GM12878 (cell line): ENCODE measurements at regions of chr12 and their contacts with region 1.

Region 1: DNA sequence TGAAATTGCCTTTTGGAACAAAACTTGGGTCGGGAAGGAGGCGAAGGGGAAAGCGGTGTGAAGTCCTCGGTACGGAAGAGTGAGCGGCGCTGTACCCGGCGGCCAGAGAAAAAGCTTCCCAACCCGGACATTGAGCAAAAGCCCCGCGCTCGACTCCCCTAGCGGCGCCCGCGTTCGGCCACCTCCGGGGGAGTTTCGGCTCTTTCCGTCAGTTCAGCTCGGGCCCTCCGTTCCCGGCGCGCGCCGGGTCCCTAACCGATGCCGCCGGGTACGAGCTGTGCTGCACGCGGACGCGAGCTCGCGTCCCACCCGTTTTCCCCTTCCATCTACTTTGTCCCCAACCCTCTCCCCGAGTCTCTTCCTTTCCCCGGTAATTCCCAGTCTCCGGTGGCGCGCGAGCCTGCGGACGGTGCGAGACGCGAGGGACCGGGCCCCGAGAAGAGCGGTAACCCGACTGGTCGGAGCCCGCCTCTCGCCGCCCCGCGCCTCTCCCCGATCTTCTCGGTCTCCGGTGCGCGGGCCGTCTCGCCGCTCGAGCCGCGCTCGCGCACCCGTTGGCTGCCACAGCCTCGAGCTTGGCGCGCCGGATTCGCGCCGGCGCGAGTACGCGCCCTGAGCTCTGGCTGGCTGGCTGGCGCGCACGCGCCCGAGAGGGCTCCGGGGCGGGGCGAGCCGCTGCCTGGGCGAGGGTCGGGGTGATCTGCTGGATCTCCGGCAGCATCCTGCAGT is 446 bp upstream of the SPATS2 start:
- DNase-seq: peak; percentile 73
- ATAC-seq: peak; percentile 84
- H3K4me3 ChIP-seq: peak overlapping the region; percentile 89
- H3K27ac ChIP-seq: peak overlapping the region; percentile 97
- H3K4me1 ChIP-seq: peaks cover 16% of the 10 kb centered on the region
- H3K27me3 ChIP-seq: no peaks in the 10 kb centered on the region
- CTCF ChIP-seq: peak in 2 of 3 experiments; percentile 8 to 10; a peak in 1 of 6 replicates
- EP300 ChIP-seq: no peak
- POLR2A ChIP-seq: peak; percentile 87
- RAD21 ChIP-seq: no peak

Region 2: DNA sequence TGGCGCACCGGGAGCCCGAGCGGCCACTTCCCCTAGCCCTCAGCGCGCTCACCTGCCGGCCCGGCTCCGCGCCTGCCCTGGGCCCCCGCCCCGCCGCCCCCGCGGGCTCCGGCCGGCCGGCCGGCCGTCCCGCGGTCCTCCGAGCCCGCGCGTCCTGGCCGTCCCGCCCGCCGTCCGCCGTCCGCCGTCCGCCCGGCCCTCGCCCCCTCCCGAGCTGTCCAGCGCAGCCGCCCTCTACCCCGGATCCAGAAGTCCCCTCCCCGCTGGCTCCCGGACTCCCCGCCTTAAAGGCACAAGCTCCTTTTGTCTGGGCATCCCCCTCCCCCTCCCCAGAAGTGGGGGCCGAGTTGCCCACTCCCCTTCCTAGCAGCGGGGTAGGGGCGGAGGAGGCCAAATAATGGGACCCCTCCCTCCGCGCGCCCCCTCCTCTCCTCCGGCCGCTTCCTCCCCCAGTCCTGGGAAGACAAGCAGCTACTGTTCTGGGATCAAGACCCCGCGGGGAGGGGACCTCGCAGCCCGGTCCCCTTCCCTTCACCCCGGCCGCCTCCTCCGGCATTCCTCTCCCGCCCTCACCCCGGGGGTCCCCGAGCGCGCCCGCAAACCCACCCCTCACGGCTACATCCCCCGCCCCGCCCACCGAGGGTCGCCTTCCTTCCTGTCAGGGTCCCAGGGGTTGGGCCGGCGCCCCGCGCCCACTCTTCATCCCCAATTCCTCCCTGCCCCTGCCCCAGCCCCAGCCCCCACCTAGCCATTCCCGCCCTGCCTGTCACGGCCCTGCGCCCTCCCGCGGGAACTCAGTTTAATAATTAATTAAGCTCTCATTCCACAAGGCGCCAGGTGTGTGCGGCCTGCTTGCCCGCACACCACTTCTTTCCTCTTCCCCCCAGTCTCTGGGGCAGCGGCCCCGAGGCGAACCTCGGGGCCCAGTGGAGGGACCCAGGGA is 577.7 kb before region 1 on chr12 and contains the start of gene ADCY6:
- CTCF ChIA-PET with region 1: no interaction called
- POLR2A ChIA-PET with region 1: no interaction called
- RAD21 ChIA-PET with region 1: no interaction called
- SMC1A ChIA-PET with region 1: no interaction called
- in situ Hi-C with region 1: no loop called
- intact Hi-C with region 1: no loop called
- DNase-seq: no peak
- ATAC-seq: peak; percentile 78
- H3K4me3 ChIP-seq: peak within 1 kb of the TSS; percentile 11; the same call in 1 of the 2 replicates
- H3K27ac ChIP-seq: no peak within 1 kb of the TSS
- H3K4me1 ChIP-seq: no peaks in the 10 kb centered on the region
- H3K27me3 ChIP-seq: no peaks in the 10 kb centered on the region
- CTCF ChIP-seq: no peak
- EP300 ChIP-seq: no peak
- POLR2A ChIP-seq: no peak
- RAD21 ChIP-seq: no peak
- polyA plus RNA-seq, gene ADCY6: 0.07 to 0.14 TPM

Region 3: DNA sequence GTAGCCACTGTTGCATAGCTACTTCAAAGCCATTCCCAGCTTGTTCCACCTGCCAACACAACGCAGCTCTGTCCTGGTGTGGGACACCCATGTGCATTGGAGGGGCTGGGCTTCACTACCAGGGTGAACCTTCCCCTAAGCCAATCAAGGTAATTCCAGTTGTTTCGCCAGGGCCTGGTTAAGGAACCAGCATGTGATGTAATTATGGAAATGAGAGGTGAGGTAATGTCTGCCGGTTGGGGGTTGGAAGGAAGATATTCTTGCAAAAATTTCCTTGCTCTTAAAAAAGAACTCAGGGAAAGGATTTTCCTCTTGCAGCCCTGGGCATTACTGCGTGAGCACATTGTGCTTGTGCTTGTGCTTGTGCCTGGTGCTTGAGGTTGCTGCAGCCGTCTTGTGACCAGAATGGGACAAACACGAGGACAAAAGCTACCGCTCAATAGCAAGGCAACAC is 87.1 kb before region 1 on chr12:
- CTCF ChIA-PET with region 1: no interaction called
- POLR2A ChIA-PET with region 1: no interaction called
- RAD21 ChIA-PET with region 1: no interaction called
- SMC1A ChIA-PET with region 1: no interaction called
- in situ Hi-C with region 1: no loop called
- intact Hi-C with region 1: no loop called
- DNase-seq: no peak
- ATAC-seq: no peak
- H3K4me3 ChIP-seq: no peak overlapping the region
- H3K27ac ChIP-seq: no peak overlapping the region
- H3K4me1 ChIP-seq: no peaks in the 10 kb centered on the region
- H3K27me3 ChIP-seq: peaks cover 0 to 2% of the 10 kb centered on the region in 2 experiments; a peak in 2 of 4 replicates
- CTCF ChIP-seq: no peak
- EP300 ChIP-seq: no peak
- POLR2A ChIP-seq: no peak
- RAD21 ChIP-seq: no peak

Region 4: GRCh38 chr12:49322708-49323523 is 43.9 kb before region 1 on chr12 and contains the start of gene TROAP:
- CTCF ChIA-PET with region 1: interaction called, 3 read pairs
- POLR2A ChIA-PET with region 1: interaction called, 10 read pairs
- RAD21 ChIA-PET with region 1: interaction called, 4 read pairs
- SMC1A ChIA-PET with region 1: interaction called, 3 read pairs
- in situ Hi-C with region 1: no loop called
- intact Hi-C with region 1: no loop called
- DNase-seq: peak; percentile 96
- ATAC-seq: peak; percentile 99
- H3K4me3 ChIP-seq: peak within 1 kb of the TSS; percentile 95
- H3K27ac ChIP-seq: peak within 1 kb of the TSS; percentile 87
- H3K4me1 ChIP-seq: peaks cover 9% of the 10 kb centered on the region
- H3K27me3 ChIP-seq: no peaks in the 10 kb centered on the region
- CTCF ChIP-seq: no peak
- EP300 ChIP-seq: no peak
- POLR2A ChIP-seq: peak; percentile 95
- RAD21 ChIP-seq: no peak
- polyA plus RNA-seq, gene TROAP: 26.8 to 46.9 TPM

Region 5: DNA sequence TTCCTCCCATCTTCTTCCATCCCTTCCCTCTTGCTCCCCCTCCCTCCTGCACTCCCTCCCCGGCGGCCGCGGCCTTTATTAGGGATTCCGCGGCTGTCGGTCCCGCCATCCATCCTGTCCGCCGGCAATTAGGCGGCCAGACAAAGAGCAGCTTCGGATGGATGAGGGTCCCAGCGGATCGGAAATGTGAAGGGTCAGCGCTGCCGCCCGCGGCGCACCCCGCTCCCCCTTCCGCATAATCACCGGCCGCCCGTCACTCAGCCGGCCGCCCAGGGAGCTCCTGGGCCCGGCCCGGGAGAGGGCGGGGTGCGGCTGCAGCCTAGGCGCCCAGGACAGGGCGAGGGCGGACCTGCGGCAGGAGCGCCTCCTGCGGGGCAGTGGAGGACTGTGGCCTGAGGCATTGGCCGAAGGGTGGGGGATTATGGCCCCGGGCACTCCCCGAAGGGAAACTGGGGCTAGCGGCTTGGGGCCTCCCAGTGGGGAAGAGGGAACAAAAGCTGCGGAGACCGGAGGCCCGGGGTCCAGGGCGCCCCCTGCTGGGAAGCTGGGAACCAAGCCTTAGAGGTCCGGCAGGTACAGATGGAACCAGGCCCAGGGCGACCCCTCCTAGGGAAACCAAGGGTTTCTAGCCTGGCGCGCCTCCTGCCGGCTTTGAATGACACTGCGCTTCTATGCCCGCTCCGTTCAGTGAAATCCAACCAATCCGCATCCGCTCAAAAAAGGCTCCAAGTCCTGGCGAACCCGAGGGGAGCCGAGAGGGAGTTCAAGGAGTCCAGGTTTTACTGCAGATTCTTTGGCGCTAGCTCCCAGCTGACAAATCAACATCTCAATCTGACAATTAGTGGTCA is 24.5 kb before region 1 on chr12:
- CTCF ChIA-PET with region 1: interaction called, 24 read pairs
- POLR2A ChIA-PET with region 1: interaction called, 10 read pairs
- RAD21 ChIA-PET with region 1: interaction called, 6 read pairs
- SMC1A ChIA-PET with region 1: interaction called, 4 read pairs
- in situ Hi-C with region 1: no loop called
- intact Hi-C with region 1: no loop called
- DNase-seq: no peak
- ATAC-seq: peak; percentile 80
- H3K4me3 ChIP-seq: peak overlapping the region; percentile 8; the same call in 1 of the 2 replicates
- H3K27ac ChIP-seq: no peak overlapping the region
- H3K4me1 ChIP-seq: peaks cover 32% of the 10 kb centered on the region
- H3K27me3 ChIP-seq: peaks cover 24 to 33% of the 10 kb centered on the region in 2 experiments
- CTCF ChIP-seq: peak; percentile 72 to 91 (median 91)
- EP300 ChIP-seq: no peak
- POLR2A ChIP-seq: no peak
- RAD21 ChIP-seq: peak; percentile 44; the same call in 1 of the 2 replicates

Region 6: GRCh38 chr12:49347384-49348237 is 19.2 kb before region 1 on chr12:
- CTCF ChIA-PET with region 1: interaction called, 24 read pairs
- POLR2A ChIA-PET with region 1: interaction called, 10 read pairs
- RAD21 ChIA-PET with region 1: interaction called, 6 read pairs
- SMC1A ChIA-PET with region 1: interaction called, 4 read pairs
- in situ Hi-C with region 1: no loop called
- intact Hi-C with region 1: no loop called
- DNase-seq: no peak
- ATAC-seq: peak; percentile 88
- H3K4me3 ChIP-seq: peak overlapping the region; percentile 49
- H3K27ac ChIP-seq: no peak overlapping the region
- H3K4me1 ChIP-seq: peaks cover 34% of the 10 kb centered on the region
- H3K27me3 ChIP-seq: peaks cover 13 to 22% of the 10 kb centered on the region in 2 experiments
- CTCF ChIP-seq: peak; percentile 85 to 96 (median 86)
- EP300 ChIP-seq: no peak
- POLR2A ChIP-seq: no peak
- RAD21 ChIP-seq: peak; percentile 47

Region 7: GRCh38 chr12:49428793-49429192 is 62.0 kb after region 1 on chr12:
- CTCF ChIA-PET with region 1: interaction called, 6 read pairs
- POLR2A ChIA-PET with region 1: interaction called, 30 read pairs
- RAD21 ChIA-PET with region 1: interaction called, 19 read pairs
- SMC1A ChIA-PET with region 1: interaction called, 18 read pairs
- in situ Hi-C with region 1: no loop called
- intact Hi-C with region 1: loop called (anchors 1 kb)
- DNase-seq: peak; percentile 38
- ATAC-seq: peak; percentile 87
- H3K4me3 ChIP-seq: peak overlapping the region; percentile 33; the same call in 1 of the 2 replicates
- H3K27ac ChIP-seq: peak overlapping the region; percentile 96
- H3K4me1 ChIP-seq: peaks cover 20% of the 10 kb centered on the region
- H3K27me3 ChIP-seq: no peaks in the 10 kb centered on the region
- CTCF ChIP-seq: no peak
- EP300 ChIP-seq: no peak
- POLR2A ChIP-seq: no peak
- RAD21 ChIP-seq: no peak

Region 8: DNA sequence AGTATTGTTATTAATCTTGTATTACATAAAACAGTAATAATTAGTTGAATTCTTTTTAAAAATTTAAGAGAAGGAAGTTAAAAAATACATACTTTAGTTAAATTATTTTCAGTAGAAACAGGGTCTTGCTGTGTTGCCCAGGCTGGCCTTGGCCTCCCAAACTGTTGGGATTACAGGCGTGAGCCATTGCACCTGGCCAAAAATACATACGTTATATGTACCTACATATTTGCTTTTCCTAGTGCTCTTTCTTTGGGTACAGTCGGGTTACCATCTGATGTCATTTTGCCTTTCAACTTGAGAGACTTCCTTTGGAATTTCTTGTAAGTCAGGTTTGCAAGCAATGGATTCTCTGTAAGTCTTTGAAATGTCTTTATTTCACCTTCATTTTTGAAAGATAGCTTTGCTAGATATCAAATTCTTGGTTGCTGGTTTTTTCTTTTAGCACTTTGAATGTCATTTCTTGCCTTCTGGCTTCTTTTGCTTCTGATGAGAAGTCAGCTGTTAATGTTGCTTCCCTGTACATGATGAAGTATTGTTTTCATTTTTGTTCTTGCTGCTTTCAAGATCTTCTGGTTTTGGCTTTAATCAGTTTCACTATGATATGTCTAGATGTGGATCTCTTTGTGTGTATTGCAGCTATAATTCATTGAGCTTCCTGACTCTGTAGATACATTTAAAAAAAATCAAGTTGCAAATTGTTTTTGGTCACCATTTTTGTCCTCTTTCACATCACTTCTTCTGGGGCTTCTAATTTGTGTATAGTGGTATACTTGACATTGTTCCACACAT is 84.8 kb after region 1 on chr12:
- CTCF ChIA-PET with region 1: interaction called, 4 read pairs
- POLR2A ChIA-PET with region 1: interaction called, 7 read pairs
- RAD21 ChIA-PET with region 1: interaction called, 5 read pairs
- SMC1A ChIA-PET with region 1: interaction called, 4 read pairs
- in situ Hi-C with region 1: no loop called
- intact Hi-C with region 1: loop called (anchors 2 kb)
- DNase-seq: peak; percentile 62
- ATAC-seq: peak; percentile 96
- H3K4me3 ChIP-seq: no peak overlapping the region
- H3K27ac ChIP-seq: peak overlapping the region; percentile 74
- H3K4me1 ChIP-seq: peaks cover 18% of the 10 kb centered on the region
- H3K27me3 ChIP-seq: no peaks in the 10 kb centered on the region
- CTCF ChIP-seq: no peak
- EP300 ChIP-seq: no peak
- POLR2A ChIP-seq: no peak
- RAD21 ChIP-seq: no peak

Region 9: GRCh38 chr12:49503674-49504180 is 136.9 kb after region 1 on chr12:
- CTCF ChIA-PET with region 1: no interaction called
- POLR2A ChIA-PET with region 1: interaction called, 3 read pairs
- RAD21 ChIA-PET with region 1: interaction called, 258 read pairs
- SMC1A ChIA-PET with region 1: interaction called, 740 read pairs
- in situ Hi-C with region 1: no loop called
- intact Hi-C with region 1: no loop called
- DNase-seq: no peak
- ATAC-seq: no peak
- H3K4me3 ChIP-seq: no peak overlapping the region
- H3K27ac ChIP-seq: no peak overlapping the region
- H3K4me1 ChIP-seq: peaks cover 11% of the 10 kb centered on the region
- H3K27me3 ChIP-seq: no peaks in the 10 kb centered on the region
- CTCF ChIP-seq: no peak
- EP300 ChIP-seq: no peak
- POLR2A ChIP-seq: no peak
- RAD21 ChIP-seq: no peak